Right ventricle myocardium superior (tissue), 1 donor: ENCODE measurements at regions of chr9 and their contacts with region 1.

Region 1: GRCh38 chr9:107472581-107473340 is 16.8 kb downstream of the KLF4 start:
- DNase-seq: no peak
- ATAC-seq: no peak

Region 2: GRCh38 chr9:107118863-107119624 is 353.7 kb before region 1 on chr9:
- intact Hi-C with region 1: no loop called
- DNase-seq: no peak
- ATAC-seq: peak; percentile 88

Region 3: DNA sequence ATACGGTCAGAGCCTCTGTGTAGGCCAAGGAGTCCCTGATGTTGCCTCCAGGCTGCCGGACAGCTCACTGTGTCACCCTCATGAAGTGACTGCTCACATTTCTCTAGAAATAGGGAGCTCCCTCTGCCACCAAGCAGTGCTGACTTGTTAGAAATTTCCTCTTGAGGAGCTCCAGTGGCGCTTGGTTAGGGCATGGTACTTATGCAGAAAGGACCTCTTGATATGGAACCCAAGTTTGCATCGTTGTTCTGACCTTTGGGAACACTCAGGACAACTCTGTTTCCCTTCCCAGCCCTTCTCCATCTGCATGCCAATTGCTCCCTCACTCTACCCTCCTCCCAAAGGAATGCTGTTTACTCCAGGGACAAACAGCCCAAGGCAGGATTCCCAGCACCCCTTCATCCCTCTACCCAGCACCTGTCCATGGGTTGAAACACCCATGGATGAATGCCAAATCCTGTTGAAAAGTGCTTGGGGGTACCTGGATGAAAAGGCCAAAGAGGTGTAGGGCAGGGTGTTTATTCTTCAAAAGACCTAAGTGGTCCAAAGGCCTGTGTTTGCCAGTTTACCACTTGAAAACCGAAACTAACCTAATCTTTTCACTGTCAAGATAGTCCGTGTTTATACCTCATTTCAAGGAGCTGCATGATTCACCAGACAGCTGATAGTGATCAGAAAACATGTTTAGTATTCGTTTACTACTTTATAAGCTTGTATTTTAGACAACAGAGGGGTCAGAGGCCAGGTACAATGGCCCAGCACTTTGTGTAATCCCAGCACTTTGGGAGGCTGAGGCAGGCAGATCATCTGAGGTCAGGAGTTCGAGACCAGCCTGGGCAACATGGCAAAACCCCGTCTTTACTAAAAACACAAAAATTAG is 34.3 kb before region 1 on chr9:
- intact Hi-C with region 1: no loop called
- DNase-seq: no peak
- ATAC-seq: no peak

Region 4: DNA sequence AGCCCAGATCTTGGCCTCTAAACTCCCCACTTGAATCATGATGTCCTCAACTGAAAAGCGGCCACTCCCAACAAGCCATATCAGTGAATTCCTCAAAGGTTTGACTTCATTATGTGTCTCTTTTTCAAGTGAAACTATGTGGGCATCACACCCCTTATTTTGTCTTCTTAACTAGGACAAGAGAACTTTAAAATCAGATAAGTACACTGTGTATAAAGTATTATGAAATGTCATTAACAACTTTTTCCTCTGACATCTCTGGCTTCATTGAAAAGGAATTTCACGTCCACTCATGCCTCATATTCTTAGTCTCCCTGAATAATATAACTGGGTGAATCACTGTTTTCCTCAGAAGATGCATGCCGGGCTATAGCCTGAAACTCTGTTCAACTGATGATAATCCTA is 967.2 kb after region 1 on chr9:
- intact Hi-C with region 1: loop called (anchors 10 kb)
- DNase-seq: no peak
- ATAC-seq: no peak